ENCODE measurements at regions of chr1 and their contacts with region 1.

Region 1: GRCh38 chr1:158124999-158125398 is 55.7 kb upstream of the CD1D start:
- DNase-seq: peak; percentile 98
- H3K4me3 ChIP-seq: no peak overlapping the region
- H3K27ac ChIP-seq: no peak overlapping the region
- H3K4me1 ChIP-seq: peaks cover 30% of the 10 kb centered on the region
- H3K27me3 ChIP-seq: no peaks in the 10 kb centered on the region
- CTCF ChIP-seq: peak; percentile 98

Region 2: DNA sequence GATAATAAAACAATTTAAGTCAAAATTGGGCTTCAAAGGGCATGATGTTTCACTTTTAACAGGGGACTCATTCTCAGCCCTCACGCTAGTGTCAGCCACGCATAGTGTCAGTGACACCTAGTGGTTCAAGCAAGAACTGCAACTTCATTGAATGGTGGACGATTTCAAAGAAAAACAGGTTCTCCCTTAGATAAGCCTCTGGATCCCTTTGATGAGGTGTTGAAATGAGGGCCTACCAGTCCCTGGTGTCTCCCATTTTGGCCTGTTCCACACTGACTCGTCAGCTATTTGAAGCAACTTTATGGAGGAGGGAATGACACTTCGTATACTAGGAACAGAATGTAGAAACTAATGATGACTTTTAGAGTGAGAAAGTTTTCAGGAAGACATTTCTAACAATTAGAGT is 628.9 kb before region 1 on chr1:
- CTCF ChIA-PET with region 1: no interaction called
- POLR2A ChIA-PET with region 1: no interaction called
- intact Hi-C with region 1: loop called (anchors 5 kb)
- DNase-seq: peak; percentile 57
- H3K4me3 ChIP-seq: no peak overlapping the region
- H3K27ac ChIP-seq: no peak overlapping the region
- H3K4me1 ChIP-seq: no peaks in the 10 kb centered on the region
- H3K27me3 ChIP-seq: peaks cover 19% of the 10 kb centered on the region
- CTCF ChIP-seq: peak; percentile 88

Region 3: GRCh38 chr1:157773493-157774350 is 351.3 kb before region 1 on chr1:
- CTCF ChIA-PET with region 1: no interaction called
- POLR2A ChIA-PET with region 1: no interaction called
- intact Hi-C with region 1: loop called (anchors 10 kb)
- DNase-seq: peak; percentile 35
- H3K4me3 ChIP-seq: no peak overlapping the region
- H3K27ac ChIP-seq: no peak overlapping the region
- H3K4me1 ChIP-seq: peaks cover 19% of the 10 kb centered on the region
- H3K27me3 ChIP-seq: no peaks in the 10 kb centered on the region
- CTCF ChIP-seq: peak; percentile 47

Region 4: DNA sequence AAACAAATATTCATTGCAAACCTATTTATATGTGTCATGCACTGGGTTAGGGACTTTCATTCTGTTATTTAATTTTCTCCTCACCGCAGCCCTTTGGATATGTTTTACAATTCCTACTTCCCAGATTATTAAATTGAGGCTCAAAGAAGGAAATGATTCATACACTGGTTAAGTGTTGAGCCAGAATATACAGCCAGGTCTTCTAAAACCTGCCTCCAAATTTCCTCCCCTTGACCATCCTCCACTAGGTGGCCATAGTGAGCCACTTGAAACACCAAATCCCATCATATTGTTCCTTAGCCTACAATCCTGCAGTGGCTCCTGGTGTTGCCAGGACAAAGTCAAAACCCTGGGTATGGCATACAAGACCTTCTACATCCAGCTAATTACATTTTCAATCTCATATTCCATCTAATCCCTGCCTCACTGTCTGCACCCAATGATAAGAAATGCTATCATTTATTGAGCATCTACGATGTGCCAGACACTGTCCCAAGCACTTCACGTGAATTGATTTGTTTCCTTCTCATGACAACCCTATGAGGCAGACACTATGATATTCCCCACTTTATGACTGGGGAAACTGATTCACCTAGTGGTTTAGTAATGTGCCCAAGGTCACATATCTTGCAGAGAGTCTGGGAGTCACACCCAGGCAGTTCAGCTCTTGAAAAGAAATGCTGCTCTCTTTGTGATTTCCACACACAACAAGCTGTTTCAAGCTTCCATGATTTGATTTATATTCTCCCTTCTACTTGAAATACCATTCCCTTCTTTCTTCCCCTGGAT is 155.1 kb before region 1 on chr1:
- CTCF ChIA-PET with region 1: interaction called, 165 read pairs
- POLR2A ChIA-PET with region 1: no interaction called
- intact Hi-C with region 1: loop called (anchors 1 kb)
- DNase-seq: peak; percentile 95
- H3K4me3 ChIP-seq: no peak overlapping the region
- H3K27ac ChIP-seq: peak overlapping the region; percentile 92
- H3K4me1 ChIP-seq: peaks cover 57% of the 10 kb centered on the region
- H3K27me3 ChIP-seq: no peaks in the 10 kb centered on the region
- CTCF ChIP-seq: peak; percentile 91

Region 5: GRCh38 chr1:158087320-158087927 is 37.6 kb before region 1 on chr1:
- CTCF ChIA-PET with region 1: interaction called, 10 read pairs
- POLR2A ChIA-PET with region 1: no interaction called
- intact Hi-C with region 1: no loop called
- DNase-seq: peak; percentile 87
- H3K4me3 ChIP-seq: no peak overlapping the region
- H3K27ac ChIP-seq: peak overlapping the region; percentile 45
- H3K4me1 ChIP-seq: no peaks in the 10 kb centered on the region
- H3K27me3 ChIP-seq: no peaks in the 10 kb centered on the region
- CTCF ChIP-seq: peak; percentile 94

Region 6: GRCh38 chr1:158251163-158251562 is 126.2 kb after region 1 on chr1:
- CTCF ChIA-PET with region 1: no interaction called
- POLR2A ChIA-PET with region 1: no interaction called
- intact Hi-C with region 1: no loop called
- DNase-seq: no peak
- H3K4me3 ChIP-seq: no peak overlapping the region
- H3K27ac ChIP-seq: no peak overlapping the region
- H3K4me1 ChIP-seq: no peaks in the 10 kb centered on the region
- H3K27me3 ChIP-seq: peaks cover 58% of the 10 kb centered on the region
- CTCF ChIP-seq: no peak

Measured in A673 (cell line).